Cardiac septum (tissue), 1 donor: ENCODE measurements at regions of chr17 and their contacts with region 1.

Region 1: GRCh38 chr17:1796800-1797199 is 32.9 kb downstream of the SMYD4 start:
- DNase-seq: no peak

Region 2: DNA sequence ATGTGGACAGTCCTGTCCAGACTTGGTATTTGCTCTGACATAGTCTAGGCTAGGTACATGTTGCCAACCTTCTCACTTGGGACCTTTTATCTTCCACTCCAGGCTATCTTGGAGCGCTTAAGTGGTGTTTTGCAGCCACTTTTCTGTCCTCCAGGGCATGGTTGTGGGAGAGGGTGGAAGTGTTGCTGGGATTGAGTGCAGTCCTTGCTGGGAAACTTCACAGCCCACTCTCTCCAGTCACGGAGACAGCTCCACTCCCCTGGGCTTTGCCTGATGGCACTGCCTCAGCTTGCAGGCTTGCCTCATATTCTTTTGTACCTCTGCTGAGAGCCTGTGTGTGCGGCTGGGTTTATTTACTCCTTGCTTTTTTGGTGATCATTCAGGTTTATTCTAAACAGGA is 50.4 kb after region 1 on chr17:
- intact Hi-C with region 1: loop called (anchors 5 kb)
- DNase-seq: no peak

Region 3: DNA sequence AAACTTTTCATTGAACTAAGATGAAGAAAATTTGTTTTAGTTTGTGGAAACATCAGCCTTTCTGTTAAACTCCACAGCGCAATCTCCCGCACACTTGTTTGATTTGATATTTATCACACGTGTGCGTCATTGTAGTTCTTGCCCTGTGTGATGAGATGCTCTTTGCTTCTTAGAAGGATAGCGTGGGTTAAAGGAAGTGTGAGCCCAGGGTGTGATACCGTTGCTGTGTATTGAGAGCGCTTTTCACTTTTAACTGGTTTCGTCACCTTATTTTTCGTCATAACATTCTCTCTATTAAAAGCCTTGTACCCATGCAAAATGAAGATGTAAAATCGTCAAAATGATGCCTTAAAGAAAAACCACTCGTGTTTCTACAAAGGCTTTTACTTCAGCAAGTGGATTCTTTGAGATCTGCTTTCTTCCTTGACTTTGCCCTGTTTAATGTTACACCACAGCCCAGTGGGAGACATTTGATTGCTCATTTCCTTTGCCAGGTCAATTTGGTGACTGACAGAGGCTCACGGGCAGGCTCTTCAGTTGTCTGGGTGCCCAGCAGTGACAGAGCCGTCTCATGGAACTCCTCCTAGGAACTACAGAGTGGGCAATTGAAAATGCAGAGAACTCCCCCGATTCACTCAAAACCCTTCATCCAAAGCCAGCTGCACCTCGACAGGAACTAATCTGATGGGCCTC is 94.1 kb after region 1 on chr17:
- intact Hi-C with region 1: no loop called
- DNase-seq: no peak